ENCODE measurements at regions of chr19 and their contacts with region 1.

Region 1: DNA sequence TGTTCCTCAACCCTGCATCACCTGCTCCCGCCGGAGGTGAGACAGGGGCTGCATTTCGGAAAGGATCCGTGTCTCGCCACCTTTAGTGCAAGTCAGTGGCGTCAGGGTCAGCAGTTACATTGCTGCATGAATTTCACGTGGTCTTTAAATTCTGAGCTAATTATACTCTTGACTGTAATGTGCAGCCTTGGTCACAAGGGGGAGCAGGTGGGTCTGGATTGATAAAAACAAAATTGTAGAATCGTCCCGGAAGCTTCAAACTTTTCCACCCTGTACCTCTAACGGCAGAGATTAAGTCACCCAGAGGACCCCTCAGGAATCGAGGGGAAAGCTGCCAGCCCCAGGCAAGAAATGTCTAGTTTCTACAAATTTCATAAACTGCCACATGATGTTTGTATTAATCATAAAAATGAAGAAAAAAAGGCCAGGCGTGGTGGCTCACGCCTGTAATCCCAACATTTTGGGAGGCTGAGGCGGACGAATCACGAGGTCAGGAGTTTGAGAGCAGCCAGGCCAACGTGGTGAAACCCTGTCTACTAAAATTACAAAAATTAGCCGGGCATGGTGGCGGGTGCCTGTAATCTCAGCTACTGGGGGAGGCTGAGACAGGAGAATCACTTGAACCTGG is 20.2 kb downstream of the BBC3 start:
- DNase-seq: peak; percentile 73
- ATAC-seq: peak; percentile 72
- H3K4me3 ChIP-seq: no peak overlapping the region
- H3K27ac ChIP-seq: peak overlapping the region; percentile 66
- H3K4me1 ChIP-seq: peaks cover 14% of the 10 kb centered on the region
- H3K27me3 ChIP-seq: no peaks in the 10 kb centered on the region
- CTCF ChIP-seq: peak; percentile 82

Region 2: DNA sequence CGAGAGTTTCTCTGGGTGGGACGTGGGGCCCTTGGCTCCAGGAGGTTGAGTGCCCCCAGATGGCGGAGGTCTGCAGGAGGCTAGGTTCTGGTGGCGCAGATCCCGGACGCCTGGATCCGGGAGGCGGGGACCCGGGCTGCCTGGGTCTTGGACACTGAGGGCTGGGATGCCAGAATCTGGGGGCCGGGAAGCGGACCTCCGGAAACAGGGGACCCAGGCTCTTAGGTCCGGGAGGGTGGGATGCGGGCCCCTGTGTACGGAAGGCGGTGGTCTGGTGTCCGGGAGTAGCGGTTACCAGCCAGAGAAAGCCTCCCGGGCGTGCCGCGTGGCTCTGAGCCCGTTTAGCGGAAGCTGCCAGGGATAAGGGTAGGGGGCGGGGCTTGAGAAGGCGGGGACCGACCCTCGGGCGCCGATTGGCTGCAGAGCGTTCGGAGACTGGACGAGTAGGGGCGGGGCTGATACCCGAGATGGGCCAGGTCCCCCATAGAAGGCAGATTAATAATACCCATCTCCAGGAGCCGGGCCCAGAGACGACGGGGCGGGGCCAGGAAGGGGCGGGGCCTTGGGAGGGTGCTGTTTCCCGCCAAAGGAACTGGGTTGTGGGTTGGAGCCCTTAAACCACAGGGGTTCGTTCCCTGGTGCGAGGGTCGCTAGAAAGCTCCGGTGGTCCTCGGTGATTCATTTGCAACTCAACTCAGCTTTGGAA is 422.4 kb before region 1 on chr19 and contains the start of gene SLC1A5:
- CTCF ChIA-PET with region 1: no interaction called
- POLR2A ChIA-PET with region 1: no interaction called
- in situ Hi-C with region 1: no loop called
- intact Hi-C with region 1: no loop called
- DNase-seq: peak; percentile 77
- ATAC-seq: peak; percentile 85
- H3K4me3 ChIP-seq: peak within 1 kb of the TSS; percentile 87 to 92
- H3K27ac ChIP-seq: peak within 1 kb of the TSS; percentile 89
- H3K4me1 ChIP-seq: peaks cover 8% of the 10 kb centered on the region
- H3K27me3 ChIP-seq: no peaks in the 10 kb centered on the region
- CTCF ChIP-seq: no peak
- total RNA-seq, gene SLC1A5: 104 TPM

Region 3: GRCh38 chr19:47200530-47200929 is 10.3 kb before region 1 on chr19:
- CTCF ChIA-PET with region 1: interaction called, 14 read pairs
- POLR2A ChIA-PET with region 1: no interaction called
- in situ Hi-C with region 1: no loop called
- intact Hi-C with region 1: no loop called
- DNase-seq: no peak
- ATAC-seq: no peak
- H3K4me3 ChIP-seq: no peak overlapping the region
- H3K27ac ChIP-seq: no peak overlapping the region
- H3K4me1 ChIP-seq: no peaks in the 10 kb centered on the region
- H3K27me3 ChIP-seq: no peaks in the 10 kb centered on the region
- CTCF ChIP-seq: no peak

Region 4: DNA sequence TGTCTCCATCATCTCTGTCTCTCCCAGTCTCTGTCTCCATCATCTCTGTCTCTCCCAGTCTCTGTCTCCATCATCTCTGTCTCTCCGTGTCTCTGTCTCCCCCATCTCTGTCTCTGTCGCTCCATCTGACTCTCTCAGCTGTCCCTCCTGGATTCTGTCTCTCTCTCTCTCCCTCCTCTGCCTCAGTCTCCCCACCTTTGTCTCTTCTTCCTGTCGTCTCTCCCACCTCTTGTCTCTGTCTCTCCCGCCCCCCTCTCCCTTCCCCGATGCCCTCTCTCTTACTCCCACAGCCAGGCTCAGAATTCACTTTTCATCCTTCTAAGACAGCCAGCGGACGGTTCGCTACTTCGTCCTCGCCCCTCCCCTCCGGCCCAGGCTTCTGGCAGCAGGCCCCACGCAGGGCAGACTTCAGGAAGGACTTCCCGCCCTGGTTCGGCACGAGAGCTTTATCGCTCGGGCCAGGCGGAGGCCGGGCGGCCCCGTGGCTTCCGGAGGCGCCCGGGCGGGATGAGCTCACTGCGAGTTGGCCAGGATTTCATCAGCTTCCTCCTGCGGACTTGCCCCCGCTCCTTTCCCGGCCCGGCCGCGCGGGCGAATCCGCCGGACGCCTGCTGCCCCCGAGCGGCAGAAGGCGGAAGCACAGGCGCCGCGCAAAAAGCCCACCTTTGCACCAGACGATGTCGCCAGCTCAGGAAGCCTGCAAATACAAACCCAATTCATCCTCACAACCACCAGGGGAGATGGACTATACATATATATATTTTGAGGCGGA is 33.2 kb after region 1 on chr19:
- CTCF ChIA-PET with region 1: interaction called, 40 read pairs
- POLR2A ChIA-PET with region 1: interaction called, 4 read pairs
- in situ Hi-C with region 1: no loop called
- intact Hi-C with region 1: no loop called
- DNase-seq: no peak
- ATAC-seq: peak; percentile 89
- H3K4me3 ChIP-seq: peak overlapping the region; percentile 63 to 80
- H3K27ac ChIP-seq: peak overlapping the region; percentile 91
- H3K4me1 ChIP-seq: peaks cover 4% of the 10 kb centered on the region
- H3K27me3 ChIP-seq: no peaks in the 10 kb centered on the region
- CTCF ChIP-seq: peak; percentile 96

Region 5: DNA sequence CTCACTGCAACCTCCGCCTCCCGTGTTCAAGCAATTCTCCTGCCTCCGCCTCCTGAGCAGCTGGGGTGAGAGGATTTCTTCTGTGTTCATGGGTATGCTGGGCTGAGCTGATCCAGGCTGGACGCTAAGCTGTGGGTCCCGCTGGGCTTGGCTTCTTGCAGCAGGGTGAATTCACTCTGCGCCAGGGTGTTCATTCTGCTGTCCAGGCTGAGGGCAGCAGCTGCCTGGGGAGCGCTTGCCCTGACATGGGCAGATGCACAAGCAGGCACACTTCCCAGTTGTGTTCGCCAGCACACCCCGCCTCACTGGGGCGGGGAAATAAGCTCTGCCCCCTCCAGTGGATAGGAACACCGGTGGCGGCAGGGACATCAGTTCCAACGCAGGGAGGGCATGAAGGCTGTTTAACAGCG is 56.6 kb after region 1 on chr19:
- CTCF ChIA-PET with region 1: no interaction called
- POLR2A ChIA-PET with region 1: no interaction called
- in situ Hi-C with region 1: no loop called
- intact Hi-C with region 1: no loop called
- DNase-seq: no peak
- ATAC-seq: no peak
- H3K4me3 ChIP-seq: no peak overlapping the region
- H3K27ac ChIP-seq: no peak overlapping the region
- H3K4me1 ChIP-seq: no peaks in the 10 kb centered on the region
- H3K27me3 ChIP-seq: no peaks in the 10 kb centered on the region
- CTCF ChIP-seq: no peak